ENCODE measurements at regions of chr2 and their contacts with region 1.

Region 1: GRCh38 chr2:134934641-134935040 is 16.0 kb downstream of the CCNT2 start:
- DNase-seq: no peak
- ATAC-seq: no peak

Region 2: GRCh38 chr2:134892282-134893070 is 42.2 kb before region 1 on chr2:
- intact Hi-C with region 1: no loop called
- DNase-seq: no peak
- ATAC-seq: no peak

Region 3: DNA sequence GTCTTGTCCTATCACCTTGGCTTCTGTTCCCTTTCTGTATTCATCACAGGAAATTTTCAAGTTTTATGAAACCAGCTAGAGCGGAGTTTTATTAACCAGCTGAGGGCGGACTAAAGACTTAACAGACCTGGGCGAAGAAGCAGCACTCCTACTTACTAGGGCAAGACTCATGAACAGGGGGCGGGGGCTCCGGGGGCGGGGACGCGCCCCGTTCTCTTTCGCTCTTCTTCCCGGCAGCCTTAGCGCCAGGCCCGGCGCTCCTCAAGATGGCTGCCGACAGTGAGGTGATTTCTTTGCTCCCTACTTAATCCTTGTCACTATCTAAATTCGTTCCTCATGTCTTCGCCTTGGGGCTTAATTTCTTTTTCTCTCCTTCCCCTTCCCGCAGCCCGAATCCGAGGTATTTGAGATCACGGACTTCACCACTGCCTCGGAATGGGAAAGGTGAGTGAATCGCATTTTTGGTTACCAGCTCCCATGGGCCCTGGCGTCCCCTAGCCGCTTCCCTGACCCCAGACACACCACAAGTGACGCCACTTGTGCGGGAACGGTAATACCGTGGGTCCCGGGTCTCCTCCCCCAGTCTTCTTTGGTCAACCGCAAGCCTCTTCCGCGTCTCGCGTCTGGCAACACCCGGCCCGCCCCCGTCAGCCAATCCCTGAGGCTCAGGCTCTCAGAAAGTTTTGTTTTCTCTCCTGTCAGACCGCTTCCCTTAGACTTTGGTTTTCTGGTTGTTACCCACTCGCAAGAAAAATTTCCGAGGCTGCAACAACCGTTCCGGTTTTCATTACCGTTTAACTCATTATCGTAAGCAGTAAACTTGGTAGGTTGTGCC is 117.6 kb after region 1 on chr2 and contains the start of gene RAB3GAP1:
- intact Hi-C with region 1: loop called (anchors 10 kb)
- DNase-seq: peak; percentile 90
- ATAC-seq: peak; percentile 90
- total RNA-seq, gene RAB3GAP1: 50.1 TPM

Measured in Right ventricle myocardium inferior (tissue), 1 donor.